Sigmoid colon (tissue), 7 donors: ENCODE measurements at regions of chr1 and their contacts with region 1.

Region 1: DNA sequence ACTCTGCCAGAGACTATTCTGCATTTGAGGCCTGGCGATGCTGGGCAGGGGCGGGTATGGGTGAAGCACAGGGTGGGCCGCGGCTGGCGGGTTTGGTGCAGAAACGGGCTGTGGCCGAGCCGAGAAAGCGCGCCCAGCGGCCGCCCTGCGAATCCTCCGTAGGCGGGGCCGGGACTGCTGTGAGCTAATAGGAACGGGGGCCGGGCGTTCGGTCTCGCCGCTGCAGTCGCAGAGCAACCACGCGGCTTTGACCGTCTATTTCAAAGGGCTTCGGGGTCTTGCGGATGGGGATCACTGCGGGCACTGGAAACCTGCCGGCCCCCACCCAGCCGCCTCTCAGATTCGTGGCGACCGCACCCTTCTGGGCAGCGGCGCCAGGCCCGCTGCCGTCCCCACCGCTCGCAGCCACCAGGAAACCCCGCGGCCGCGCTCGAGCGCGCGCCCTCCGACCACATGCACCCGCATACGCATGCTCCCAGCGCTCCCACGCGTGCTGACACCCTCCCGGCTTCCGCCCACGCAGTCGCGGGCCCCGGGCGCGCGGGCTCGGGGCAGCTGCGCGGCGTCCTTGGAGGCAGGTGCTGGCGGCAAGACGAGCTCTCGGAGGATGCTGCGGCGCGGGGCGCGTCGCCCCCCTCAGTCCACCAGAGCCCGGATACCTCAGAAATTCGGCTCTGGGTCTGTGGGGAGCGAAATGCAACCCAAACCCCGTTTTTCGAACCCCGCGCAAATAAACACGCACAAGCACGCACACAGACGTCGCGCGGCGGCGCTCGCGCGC is 32.6 kb downstream of the DNTTIP2 start:
- DNase-seq: peak; percentile 95
- H3K4me3 ChIP-seq: peak overlapping the region; percentile 65 to 85 (median 70)
- H3K27ac ChIP-seq: peak overlapping the region; percentile 94 to 99 (median 97)
- H3K4me1 ChIP-seq: peaks cover 0 to 32% (median 30%) of the 10 kb centered on the region in 4 donors
- H3K27me3 ChIP-seq: no peaks in the 10 kb centered on the region
- CTCF ChIP-seq: peak in 2 of 4 experiments; percentile 38 to 46
- EP300 ChIP-seq: no peak
- POLR2A ChIP-seq: peak; percentile 37 to 41

Region 2: GRCh38 chr1:93179886-93180722 is 666.3 kb before region 1 on chr1 and contains the start of gene TMED5:
- intact Hi-C with region 1: loop called (anchors 2 kb)
- DNase-seq: peak; percentile 99
- H3K4me3 ChIP-seq: peak within 1 kb of the TSS; percentile 60 to 95 (median 82)
- H3K27ac ChIP-seq: peak within 1 kb of the TSS; percentile 96 to 99 (median 98)
- H3K4me1 ChIP-seq: peaks cover 0 to 32% (median 23%) of the 10 kb centered on the region in 4 donors
- H3K27me3 ChIP-seq: no peaks in the 10 kb centered on the region
- CTCF ChIP-seq: peak in 3 of 4 experiments; percentile 22 to 52 (median 35)
- EP300 ChIP-seq: no peak
- POLR2A ChIP-seq: peak; percentile 93 to 94
- total RNA-seq, gene TMED5: 41.0 to 59.7 (median 47.0) TPM

Region 3: DNA sequence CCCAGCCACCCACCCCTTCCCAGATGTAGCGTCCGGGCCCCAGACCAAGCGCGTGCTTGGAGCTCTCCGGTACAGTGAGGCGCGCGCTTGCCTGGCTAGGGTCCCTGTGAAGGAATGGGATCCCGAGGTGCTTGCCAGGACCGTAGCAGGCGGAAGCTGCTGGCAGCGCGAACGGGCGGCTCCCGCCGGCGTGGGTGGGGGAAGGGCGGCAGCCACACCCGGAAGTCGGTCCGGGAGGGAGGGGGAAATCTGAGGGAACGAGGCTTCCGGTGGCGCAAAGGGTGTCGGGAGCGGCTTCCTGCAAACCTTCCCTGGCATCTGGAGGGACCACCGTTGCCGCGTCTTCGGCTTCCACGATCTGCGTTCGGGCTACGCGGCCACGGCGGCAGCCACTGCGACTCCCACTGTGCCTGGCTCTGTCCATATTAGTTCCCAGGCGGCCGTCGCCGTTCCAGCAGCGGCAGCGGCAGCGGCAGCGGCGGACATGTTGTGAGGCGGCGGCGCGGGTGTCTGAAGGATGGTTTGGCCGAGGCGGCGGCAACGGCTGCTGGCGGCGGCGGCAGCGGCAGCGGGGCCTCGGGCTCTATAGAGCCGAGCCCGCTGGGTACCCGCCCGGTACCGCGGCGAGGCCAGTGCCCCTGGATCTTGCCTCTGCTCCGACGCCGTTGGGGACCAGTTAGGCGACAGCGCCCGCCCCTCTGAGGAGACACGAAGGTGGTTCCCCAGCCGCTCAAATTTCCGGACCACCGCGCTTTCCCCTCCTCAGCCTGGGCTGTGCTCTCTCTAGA is 500.6 kb before region 1 on chr1 and contains the start of gene DR1:
- intact Hi-C with region 1: loop called (anchors 2 kb)
- DNase-seq: peak; percentile 97
- H3K4me3 ChIP-seq: peak within 1 kb of the TSS; percentile 91 to 99 (median 96)
- H3K27ac ChIP-seq: peak within 1 kb of the TSS; percentile 94 to 98 (median 96)
- H3K4me1 ChIP-seq: peaks cover 0 to 69% (median 32%) of the 10 kb centered on the region in 4 donors
- H3K27me3 ChIP-seq: no peaks in the 10 kb centered on the region
- CTCF ChIP-seq: no peak
- EP300 ChIP-seq: peak in 2 of 4 donors; percentile 57 to 72
- POLR2A ChIP-seq: peak; percentile 84 to 90
- total RNA-seq, gene DR1: 19.9 to 24.2 (median 20.3) TPM

Region 4: DNA sequence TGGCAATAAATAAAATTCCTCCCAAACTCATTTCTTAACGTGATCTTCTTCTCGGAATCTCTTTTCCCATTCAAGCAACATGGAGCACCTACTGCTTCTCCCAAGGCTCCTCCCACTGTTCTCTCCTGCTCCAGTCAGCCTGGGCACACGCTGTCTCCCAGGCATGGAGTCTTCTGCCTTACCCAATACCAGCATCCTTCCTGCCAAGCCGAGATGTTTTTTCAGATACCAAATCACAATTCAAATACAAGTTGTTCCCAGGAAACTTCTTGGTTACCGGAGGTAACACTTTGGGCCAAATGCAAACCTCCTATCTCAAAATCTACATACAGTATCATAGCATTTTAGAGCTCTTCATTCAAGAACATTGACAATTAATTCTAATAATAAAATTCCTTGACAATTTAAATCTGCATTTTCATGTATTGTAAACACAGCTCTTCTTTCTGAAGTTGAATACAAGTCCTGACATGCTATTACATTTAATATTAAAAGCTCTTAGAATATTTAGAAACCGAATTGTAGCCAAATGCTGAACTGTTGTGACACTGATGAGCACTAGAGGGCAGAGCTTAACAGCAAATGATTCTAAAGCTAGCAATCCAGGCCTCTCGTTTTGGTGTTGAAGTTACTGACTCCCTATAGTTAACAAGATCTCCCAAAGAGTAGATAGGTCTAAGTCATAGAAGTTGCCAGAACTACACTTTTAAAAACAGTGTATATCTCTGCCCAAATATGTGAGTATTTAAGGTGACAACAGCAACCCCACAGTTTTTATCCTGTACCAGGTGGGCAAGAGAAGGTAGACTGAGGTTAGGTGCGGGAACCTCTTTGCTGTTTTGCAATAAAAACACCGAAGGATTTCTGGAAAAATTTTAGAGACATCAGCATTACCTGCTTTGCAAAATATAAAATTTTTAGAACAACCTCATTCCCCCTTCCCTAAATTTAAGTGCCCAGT is 217.0 kb before region 1 on chr1:
- intact Hi-C with region 1: loop called (anchors 1 kb)
- DNase-seq: no peak
- H3K4me3 ChIP-seq: no peak overlapping the region
- H3K27ac ChIP-seq: no peak overlapping the region
- H3K4me1 ChIP-seq: peaks cover 0 to 9% (median 0%) of the 10 kb centered on the region in 4 donors
- H3K27me3 ChIP-seq: no peaks in the 10 kb centered on the region
- CTCF ChIP-seq: peak; percentile 82 to 89 (median 82)
- EP300 ChIP-seq: no peak
- POLR2A ChIP-seq: no peak

Region 5: GRCh38 chr1:94012686-94013624 is 166.6 kb after region 1 on chr1:
- intact Hi-C with region 1: no loop called
- DNase-seq: no peak
- H3K4me3 ChIP-seq: no peak overlapping the region
- H3K27ac ChIP-seq: no peak overlapping the region
- H3K4me1 ChIP-seq: no peaks in the 10 kb centered on the region
- H3K27me3 ChIP-seq: no peaks in the 10 kb centered on the region
- CTCF ChIP-seq: no peak
- EP300 ChIP-seq: no peak
- POLR2A ChIP-seq: no peak

Region 6: GRCh38 chr1:94237291-94238226 is 391.2 kb after region 1 on chr1 and contains the start of gene ARHGAP29:
- intact Hi-C with region 1: loop called (anchors 10 kb)
- DNase-seq: peak; percentile 87
- H3K4me3 ChIP-seq: peak within 1 kb of the TSS; percentile 68 to 96 (median 88)
- H3K27ac ChIP-seq: peak within 1 kb of the TSS; percentile 83 to 94 (median 88)
- H3K4me1 ChIP-seq: peaks cover 0 to 17% (median 9%) of the 10 kb centered on the region in 4 donors
- H3K27me3 ChIP-seq: no peaks in the 10 kb centered on the region
- CTCF ChIP-seq: no peak
- EP300 ChIP-seq: no peak
- POLR2A ChIP-seq: no peak
- total RNA-seq, gene ARHGAP29: 23.2 to 48.2 (median 32.0) TPM